ENCODE measurements at regions of chr11 and their contacts with region 1.

Region 1: GRCh38 chr11:108093128-108093904 is 28.1 kb upstream of the ACAT1 start:
- DNase-seq: no peak
- ATAC-seq: no peak
- H3K4me3 ChIP-seq: no peak overlapping the region
- H3K27ac ChIP-seq: no peak overlapping the region
- H3K4me1 ChIP-seq: no peaks in the 10 kb centered on the region
- H3K27me3 ChIP-seq: no peaks in the 10 kb centered on the region
- CTCF ChIP-seq: no peak
- POLR2A ChIP-seq: no peak

Region 2: DNA sequence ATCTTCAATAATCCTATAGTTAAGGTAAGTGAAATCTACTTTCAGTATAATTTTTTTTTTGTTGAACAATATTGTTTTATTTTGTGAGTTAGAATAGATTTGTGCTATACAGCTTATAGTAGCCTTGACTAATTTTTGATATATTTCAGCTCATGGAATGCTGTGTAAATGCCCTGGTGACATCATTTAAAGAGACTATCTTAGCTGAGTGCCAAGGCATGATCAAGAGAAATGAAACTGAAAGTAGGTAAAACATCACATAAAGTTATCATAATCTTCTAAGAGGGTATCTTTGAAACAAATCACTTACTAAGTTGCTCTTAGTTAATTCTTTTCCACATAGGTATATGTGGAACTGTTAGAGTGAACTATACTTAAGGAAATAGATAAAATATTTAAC is 23.4 kb before region 1 on chr11:
- intact Hi-C with region 1: no loop called
- DNase-seq: no peak
- ATAC-seq: peak in 1 of 4 donors; percentile 36
- H3K4me3 ChIP-seq: no peak overlapping the region
- H3K27ac ChIP-seq: peak overlapping the region in 3 of 12 donors; percentile 17 to 56 (median 45)
- H3K4me1 ChIP-seq: peaks cover 0 to 17% (median 2%) of the 10 kb centered on the region in 12 donors
- H3K27me3 ChIP-seq: no peaks in the 10 kb centered on the region
- CTCF ChIP-seq: no peak
- POLR2A ChIP-seq: no peak

Region 3: DNA sequence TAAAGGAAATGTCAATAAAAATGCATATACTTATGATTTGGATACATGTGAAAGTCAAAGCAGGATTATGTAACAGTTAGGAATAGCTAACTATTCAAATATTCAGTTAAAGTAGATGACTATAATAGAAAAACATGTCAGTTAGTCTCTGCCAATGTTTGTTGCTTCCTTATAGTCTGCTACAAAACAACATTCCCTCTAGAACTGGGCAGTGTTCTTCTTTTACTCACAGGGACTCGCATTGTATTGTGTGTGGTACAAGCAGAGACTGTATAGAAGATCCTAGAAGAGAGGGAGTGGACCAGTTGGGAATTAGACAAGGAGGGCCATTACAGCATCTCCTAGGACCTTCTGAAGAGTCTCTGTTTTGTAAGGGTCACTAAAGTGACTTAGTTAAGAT is 38.7 kb after region 1 on chr11:
- intact Hi-C with region 1: no loop called
- DNase-seq: no peak
- ATAC-seq: no peak
- H3K4me3 ChIP-seq: no peak overlapping the region
- H3K27ac ChIP-seq: no peak overlapping the region
- H3K4me1 ChIP-seq: peaks cover 0 to 43% (median 7%) of the 10 kb centered on the region in 12 donors
- H3K27me3 ChIP-seq: no peaks in the 10 kb centered on the region
- CTCF ChIP-seq: no peak
- POLR2A ChIP-seq: no peak

Region 4: DNA sequence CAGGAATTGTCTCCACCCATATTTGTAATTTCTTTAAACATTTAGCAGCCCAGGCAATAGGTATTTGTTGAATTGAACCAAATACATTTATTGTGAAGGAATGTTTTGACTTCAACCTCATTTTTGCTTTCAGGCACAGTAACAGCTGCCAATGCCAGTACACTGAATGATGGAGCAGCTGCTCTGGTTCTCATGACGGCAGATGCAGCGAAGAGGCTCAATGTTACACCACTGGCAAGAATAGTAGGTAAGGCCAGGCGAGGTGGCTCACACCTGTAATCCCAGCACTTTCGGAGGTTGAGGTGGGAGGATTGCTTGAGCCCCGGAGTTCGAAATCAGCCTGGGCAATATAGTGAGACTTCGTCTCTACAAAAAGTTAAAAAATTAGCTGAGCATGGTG is 49.0 kb after region 1 on chr11:
- intact Hi-C with region 1: no loop called
- DNase-seq: no peak
- ATAC-seq: no peak
- H3K4me3 ChIP-seq: no peak overlapping the region
- H3K27ac ChIP-seq: no peak overlapping the region
- H3K4me1 ChIP-seq: peaks cover 0 to 7% (median 0%) of the 10 kb centered on the region in 12 donors
- H3K27me3 ChIP-seq: no peaks in the 10 kb centered on the region
- CTCF ChIP-seq: no peak
- POLR2A ChIP-seq: no peak

Region 5: DNA sequence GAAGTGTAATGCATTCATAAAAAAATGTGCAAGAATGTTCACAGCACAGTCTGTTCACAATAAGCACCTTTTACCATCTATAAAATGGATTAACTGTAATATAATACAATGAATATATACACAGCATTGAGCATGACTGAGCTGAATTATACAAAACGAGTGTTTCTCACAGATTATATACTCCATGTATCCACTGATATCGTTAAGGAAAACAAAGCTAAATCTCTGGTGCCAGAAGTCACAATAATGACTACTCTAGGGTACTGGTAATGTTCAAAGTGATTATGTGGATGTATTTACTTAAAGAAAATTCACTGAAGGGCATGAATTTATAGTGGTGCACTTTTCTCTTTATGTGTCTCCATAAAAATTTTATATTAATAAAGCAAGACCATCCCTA is 61.3 kb after region 1 on chr11:
- intact Hi-C with region 1: loop called in 1 of 10 experiments (anchors 10 kb)
- DNase-seq: no peak
- ATAC-seq: no peak
- H3K4me3 ChIP-seq: no peak overlapping the region
- H3K27ac ChIP-seq: no peak overlapping the region
- H3K4me1 ChIP-seq: no peaks in the 10 kb centered on the region
- H3K27me3 ChIP-seq: no peaks in the 10 kb centered on the region
- CTCF ChIP-seq: no peak
- POLR2A ChIP-seq: no peak

Region 6: GRCh38 chr11:108222686-108223448 is 129.6 kb after region 1 on chr11 and contains the start of gene ATM:
- intact Hi-C with region 1: no loop called
- DNase-seq: peak; percentile 99 to 100 (median 100)
- ATAC-seq: peak; percentile 97 to 99 (median 98)
- H3K4me3 ChIP-seq: peak within 1 kb of the TSS; percentile 68 to 93 (median 78)
- H3K27ac ChIP-seq: peak within 1 kb of the TSS; percentile 75 to 98 (median 93)
- H3K4me1 ChIP-seq: peaks cover 0 to 81% (median 33%) of the 10 kb centered on the region in 12 donors
- H3K27me3 ChIP-seq: no peaks in the 10 kb centered on the region
- CTCF ChIP-seq: peak; percentile 55 to 95 (median 75)
- POLR2A ChIP-seq: peak in 1 of 2 donors; percentile 47
- total RNA-seq, gene ATM: 25.3 to 50.8 (median 32.8) TPM